Posterior cingulate gyrus (tissue), 11 donors: ENCODE measurements at regions of chr2 and their contacts with region 1.

Region 1: DNA sequence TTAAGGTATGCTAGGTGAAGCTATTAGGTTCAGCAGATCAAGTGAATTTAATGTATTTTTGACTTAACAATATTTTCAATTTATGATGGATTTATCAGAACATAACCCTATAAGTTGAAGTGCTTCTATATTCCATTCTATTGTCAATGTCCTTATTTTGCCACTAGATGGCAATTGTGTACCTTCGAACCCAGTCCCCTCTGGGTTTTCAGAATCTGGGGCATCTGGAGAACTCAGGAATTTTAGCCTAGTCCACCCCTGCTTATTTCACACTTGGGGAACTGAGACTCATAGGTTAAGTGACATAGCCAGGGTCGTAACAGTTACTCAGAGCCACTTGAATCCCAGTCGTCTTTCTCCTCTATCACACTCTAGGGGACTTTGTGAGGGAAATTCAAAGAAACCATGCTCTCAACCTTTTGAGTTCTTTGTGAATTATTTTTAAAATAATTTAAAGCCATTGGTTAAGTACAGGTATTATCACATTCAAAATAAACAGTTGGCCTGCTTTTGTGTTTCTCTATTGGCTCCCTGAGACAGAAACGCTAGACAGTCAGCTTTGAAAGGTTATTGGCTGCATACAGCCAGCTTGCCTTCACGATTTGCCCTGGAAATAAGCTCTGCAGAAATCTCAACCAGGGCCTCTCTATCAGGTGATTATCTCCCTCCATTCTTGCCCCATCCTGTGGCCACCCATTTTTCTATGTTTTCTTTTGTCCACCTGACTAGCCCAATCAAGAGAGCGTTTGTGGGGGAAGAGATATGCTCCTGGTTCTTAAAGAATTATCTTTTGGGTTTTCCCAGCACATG is 145.0 kb downstream of the TTC27 start:
- DNase-seq: peak in 1 of 10 donors; percentile 13

Region 2: DNA sequence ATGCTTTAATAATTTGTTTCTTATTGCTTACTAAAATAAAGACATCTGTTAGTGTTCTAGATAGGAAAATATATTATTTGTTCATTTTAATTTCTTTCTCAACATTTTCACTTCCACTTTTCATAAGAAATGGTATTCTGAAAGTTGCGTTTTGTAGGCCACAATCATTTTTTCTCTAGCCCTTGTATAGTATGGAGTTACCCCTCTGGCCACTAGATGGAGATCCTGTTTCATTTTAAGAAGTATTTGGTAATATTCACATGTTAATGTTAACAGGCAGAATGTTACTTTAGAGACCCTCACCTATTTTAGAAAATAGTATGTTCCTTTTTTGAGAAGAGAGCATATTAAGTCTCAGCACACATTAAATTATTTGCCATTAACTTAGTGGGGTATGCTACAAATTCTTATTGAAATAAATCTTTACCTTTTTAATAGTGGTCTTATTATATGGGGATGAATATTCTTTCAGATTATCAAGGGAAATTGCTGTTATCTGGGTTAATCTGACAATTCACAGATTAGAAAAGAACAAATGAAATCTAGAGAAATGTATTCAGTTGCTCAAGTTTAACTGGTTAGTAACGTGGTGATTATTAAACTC is 218.9 kb before region 1 on chr2:
- intact Hi-C with region 1: loop called (anchors 5 kb)
- DNase-seq: no peak

Region 3: DNA sequence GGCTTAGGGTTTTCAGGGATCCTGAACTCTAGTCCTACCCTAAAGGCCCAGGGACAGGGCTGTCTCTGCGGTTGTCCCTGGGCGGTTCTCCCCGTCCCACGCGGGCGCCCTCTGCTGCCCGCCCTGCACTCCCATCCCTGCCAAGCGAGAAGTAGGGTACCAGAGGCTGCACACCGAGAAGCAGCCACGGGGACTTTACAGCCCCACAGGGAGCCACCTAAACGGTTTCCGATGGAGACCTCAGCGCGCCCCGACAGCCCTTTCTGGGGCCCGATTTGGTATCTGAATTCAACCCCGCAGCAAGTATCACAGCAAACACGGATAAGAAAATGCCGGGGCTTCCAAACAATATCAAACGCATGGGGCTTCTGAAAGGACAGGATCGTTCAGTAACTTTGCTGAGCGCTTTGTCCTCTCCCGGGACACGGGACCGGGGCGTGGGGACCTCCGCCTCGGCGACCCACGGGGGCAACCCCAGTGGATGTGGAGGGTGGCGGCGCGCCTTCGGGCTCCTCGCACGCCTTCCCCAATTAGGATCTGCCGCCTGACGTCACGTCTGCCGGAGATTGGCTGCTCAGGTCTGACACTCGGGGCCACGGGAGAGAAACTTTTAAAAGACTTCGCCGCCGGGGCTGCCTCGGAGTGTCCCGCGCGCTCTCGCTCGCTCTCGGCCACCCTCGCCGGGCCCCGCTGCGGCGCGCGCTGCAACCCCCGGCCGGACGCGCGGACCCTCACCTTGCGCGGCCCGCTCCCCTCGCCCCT is 173.7 kb after region 1 on chr2 and contains the start of gene LTBP1:
- intact Hi-C with region 1: loop called (anchors 2 kb)
- DNase-seq: peak in 9 of 10 donors; percentile 39 to 94 (median 56)

Region 4: GRCh38 chr2:33267756-33268155 is 494.9 kb after region 1 on chr2:
- intact Hi-C with region 1: loop called (anchors 10 kb)
- DNase-seq: no peak

Region 5: GRCh38 chr2:33372940-33373553 is 600.2 kb after region 1 on chr2:
- intact Hi-C with region 1: loop called (anchors 10 kb)
- DNase-seq: no peak